Left cardiac atrium (tissue), 4 donors: ENCODE measurements at regions of chr6 and their contacts with region 1.

Region 1: DNA sequence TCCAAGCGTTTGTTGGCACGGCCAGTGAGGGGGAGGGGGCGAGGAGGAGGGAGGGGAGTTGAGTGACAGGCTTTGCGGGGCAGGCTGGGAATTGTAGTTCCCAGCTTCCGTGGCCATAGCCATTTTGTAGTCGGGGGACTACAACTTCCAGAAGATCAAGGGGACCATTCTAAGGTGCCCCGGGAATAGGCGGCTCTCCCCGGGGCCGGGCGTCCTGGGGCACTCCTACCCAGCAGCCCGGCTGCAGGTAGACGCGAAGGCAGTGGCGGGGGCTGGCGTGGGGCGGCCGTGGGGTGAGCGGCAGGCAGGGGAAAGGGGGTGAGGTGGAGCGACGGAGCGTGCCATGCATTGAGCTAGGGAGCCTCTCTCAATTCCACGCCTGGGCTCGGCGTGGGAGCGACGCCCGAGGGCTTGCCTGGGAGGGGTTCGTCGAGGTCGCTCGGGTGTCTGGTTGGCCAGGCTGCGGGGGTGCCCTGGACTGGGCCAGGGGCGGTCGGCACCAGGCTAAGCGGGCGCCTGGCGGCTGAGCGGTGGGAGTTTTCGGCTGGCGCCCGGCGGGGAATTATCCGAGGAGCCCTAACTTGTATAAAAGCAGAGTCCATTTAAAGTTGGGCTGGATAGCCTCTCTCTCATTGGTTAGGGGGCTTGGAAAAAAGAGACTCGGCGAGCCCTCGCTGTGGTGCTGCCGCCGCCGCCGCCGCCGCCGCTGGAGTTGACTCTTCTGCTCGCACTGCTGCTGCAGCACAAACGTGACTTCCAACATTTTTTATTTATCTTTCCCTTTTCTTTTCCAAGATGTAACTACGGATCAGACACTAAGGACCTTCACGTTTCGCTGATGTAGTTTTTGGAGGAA is at the start of gene JARID2:
- DNase-seq: peak; percentile 99
- ATAC-seq: peak; percentile 87 to 91
- total RNA-seq, gene JARID2: 7.9 to 8.6 TPM

Region 2: DNA sequence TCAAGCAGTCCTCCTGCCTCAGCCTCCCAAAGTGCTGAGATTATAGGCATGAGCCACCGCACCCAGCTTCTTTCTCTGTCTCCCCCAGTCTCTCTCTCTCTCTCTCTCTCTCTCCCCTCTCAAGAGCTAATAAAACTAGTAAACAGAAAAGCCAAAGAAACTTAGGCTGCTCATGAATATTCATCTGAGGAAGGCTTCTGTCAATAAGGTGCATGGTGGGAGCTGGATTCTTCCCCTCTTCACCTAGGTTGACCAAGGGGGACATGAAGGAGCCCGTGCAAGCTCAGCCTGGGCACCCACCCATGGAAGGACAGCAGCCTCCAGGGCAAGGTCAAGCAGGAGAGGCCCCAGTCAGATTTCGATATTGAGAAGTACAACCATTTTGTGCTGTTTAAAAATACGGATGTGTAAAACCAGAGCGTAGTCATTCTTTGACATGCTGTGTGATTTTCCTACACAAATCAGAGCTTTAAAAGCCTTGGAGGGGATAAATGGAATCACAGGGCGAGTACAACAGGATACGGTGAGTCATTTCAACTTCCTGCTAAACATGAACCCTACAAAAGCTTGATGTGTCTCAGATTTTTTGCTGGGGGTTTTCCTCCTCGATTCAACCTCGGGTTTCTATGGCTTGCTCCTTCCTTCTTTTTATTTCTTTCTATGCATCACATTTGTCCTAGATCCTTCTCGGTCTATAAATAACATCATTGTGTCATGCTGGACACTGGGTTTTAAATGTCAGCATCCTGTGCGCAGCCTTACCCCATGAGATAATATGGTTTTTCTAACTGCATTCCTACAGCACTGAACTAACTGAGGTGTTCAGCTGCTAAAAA is 368.6 kb before region 1 on chr6:
- intact Hi-C with region 1: loop called in 1 of 2 experiments (anchors 10 kb)
- DNase-seq: no peak
- ATAC-seq: peak; percentile 79 to 80

Region 3: GRCh38 chr6:15058190-15059061 is 187.2 kb before region 1 on chr6:
- intact Hi-C with region 1: no loop called
- DNase-seq: no peak
- ATAC-seq: no peak

Region 4: GRCh38 chr6:15389765-15390723 is 144.5 kb after region 1 on chr6:
- intact Hi-C with region 1: loop called in 1 of 2 experiments (anchors 5 kb)
- DNase-seq: no peak
- ATAC-seq: peak; percentile 51 to 53

Region 5: GRCh38 chr6:15441215-15441868 is 195.8 kb after region 1 on chr6:
- intact Hi-C with region 1: loop called (anchors 5 kb)
- DNase-seq: no peak
- ATAC-seq: peak; percentile 74 to 77